Heart left ventricle (tissue), 16 donors: ENCODE measurements at regions of chr12 and their contacts with region 1.

Region 1: DNA sequence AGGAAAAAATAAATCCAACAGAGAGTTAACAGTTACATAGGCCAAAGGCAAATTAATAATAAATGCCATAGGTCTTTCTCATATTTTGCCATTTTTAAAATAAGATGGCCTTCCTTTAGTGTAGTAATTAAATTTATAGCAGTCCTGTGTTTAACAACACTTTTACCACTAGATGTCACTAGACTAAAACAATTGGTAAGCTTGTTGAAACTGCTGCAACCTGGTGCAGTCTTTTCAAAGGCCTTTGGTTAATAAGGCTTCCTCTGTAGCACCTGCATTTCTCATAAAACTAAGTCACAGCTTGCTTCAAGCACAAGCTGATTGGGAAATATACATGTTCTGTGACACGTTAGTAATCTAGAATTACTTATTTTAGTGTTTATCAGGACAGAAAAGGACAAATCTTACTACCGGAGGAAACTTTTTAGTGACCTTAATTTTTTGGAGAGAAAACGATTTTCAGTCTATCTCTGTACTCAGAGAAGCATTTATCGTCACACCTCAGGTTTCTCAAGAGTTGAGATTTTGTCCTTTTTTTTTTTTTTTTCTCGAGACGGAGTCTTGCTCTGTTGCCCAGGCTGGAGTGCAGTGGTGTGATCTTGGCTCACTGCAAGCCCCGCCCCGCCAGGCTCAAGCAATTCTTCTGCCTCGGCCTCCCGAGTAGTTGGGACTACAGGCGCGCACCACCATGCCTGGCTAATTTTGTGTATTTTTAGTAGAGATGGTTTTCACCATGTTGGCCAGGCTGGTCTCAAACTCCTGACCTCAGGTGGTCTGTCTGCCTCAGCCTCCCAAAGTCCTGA is 20.0 kb downstream of the BORCS5 start:
- DNase-seq: no peak
- ATAC-seq: peak; percentile 63 to 83 (median 74)
- H3K4me3 ChIP-seq: no peak overlapping the region
- H3K27ac ChIP-seq: no peak overlapping the region
- H3K4me1 ChIP-seq: peaks cover 0 to 15% (median 9%) of the 10 kb centered on the region in 12 donors
- H3K27me3 ChIP-seq: no peaks in the 10 kb centered on the region
- CTCF ChIP-seq: peak; percentile 63 to 85 (median 76)
- POLR2A ChIP-seq: no peak

Region 2: DNA sequence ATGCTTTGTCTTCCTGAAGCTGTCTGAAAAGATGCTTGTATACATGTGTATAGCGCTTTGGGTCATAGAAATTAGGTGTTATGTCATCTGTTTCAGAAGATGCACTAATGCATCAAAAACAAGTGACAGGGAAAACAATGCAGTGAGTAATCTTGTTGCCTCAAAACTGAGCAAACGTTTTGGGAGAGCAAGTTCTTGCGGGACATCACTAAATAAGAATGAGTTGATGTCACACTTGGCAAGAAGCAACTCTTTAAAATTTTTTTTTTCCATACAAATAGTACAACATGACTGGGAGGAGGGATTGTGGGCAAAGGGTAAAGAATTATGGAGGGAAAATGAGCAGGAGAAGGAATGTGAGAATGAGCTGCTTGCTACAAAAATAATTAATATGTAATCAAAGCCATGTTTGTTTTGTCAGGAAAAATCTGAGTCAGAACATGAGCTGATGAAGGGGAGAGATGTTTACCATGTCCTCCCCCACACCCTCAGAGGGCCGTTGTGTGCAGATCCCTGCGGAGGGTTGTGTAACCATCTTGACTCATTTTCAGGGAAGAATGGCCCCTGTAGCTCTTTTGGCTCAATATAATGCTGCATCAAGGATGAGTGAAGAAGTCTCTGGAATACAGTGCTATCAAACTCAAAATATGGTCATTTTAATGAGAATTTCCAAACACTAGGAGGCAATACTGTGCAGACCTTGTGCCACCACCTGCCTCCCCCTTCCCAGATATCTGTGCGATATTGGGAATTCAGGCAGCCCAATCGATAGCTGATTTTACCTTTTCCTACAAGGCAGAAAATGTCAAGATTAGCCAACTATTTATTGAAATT is 21.4 kb after region 1 on chr12:
- intact Hi-C with region 1: no loop called
- DNase-seq: peak in 4 of 5 donors; percentile 47 to 73 (median 63)
- ATAC-seq: peak; percentile 82 to 96 (median 94)
- H3K4me3 ChIP-seq: no peak overlapping the region
- H3K27ac ChIP-seq: peak overlapping the region in 10 of 12 donors; percentile 44 to 72 (median 56)
- H3K4me1 ChIP-seq: peaks cover 0 to 33% (median 16%) of the 10 kb centered on the region in 12 donors
- H3K27me3 ChIP-seq: no peaks in the 10 kb centered on the region
- CTCF ChIP-seq: peak in 4 of 12 donors; percentile 11 to 29 (median 28)
- POLR2A ChIP-seq: no peak

Region 3: GRCh38 chr12:12442548-12443071 is 65.8 kb after region 1 on chr12:
- intact Hi-C with region 1: no loop called
- DNase-seq: no peak
- ATAC-seq: peak; percentile 43 to 71 (median 60)
- H3K4me3 ChIP-seq: no peak overlapping the region
- H3K27ac ChIP-seq: peak overlapping the region; percentile 36 to 80 (median 70)
- H3K4me1 ChIP-seq: peaks cover 0 to 66% (median 31%) of the 10 kb centered on the region in 12 donors
- H3K27me3 ChIP-seq: no peaks in the 10 kb centered on the region
- CTCF ChIP-seq: no peak
- POLR2A ChIP-seq: no peak

Region 4: GRCh38 chr12:12654691-12655460 is 278.0 kb after region 1 on chr12:
- intact Hi-C with region 1: loop called in 9 of 10 experiments (anchors 1 to 5 kb)
- DNase-seq: no peak
- ATAC-seq: no peak
- H3K4me3 ChIP-seq: no peak overlapping the region
- H3K27ac ChIP-seq: no peak overlapping the region
- H3K4me1 ChIP-seq: peaks cover 0 to 9% (median 0%) of the 10 kb centered on the region in 12 donors
- H3K27me3 ChIP-seq: no peaks in the 10 kb centered on the region
- CTCF ChIP-seq: no peak
- POLR2A ChIP-seq: no peak

Region 5: DNA sequence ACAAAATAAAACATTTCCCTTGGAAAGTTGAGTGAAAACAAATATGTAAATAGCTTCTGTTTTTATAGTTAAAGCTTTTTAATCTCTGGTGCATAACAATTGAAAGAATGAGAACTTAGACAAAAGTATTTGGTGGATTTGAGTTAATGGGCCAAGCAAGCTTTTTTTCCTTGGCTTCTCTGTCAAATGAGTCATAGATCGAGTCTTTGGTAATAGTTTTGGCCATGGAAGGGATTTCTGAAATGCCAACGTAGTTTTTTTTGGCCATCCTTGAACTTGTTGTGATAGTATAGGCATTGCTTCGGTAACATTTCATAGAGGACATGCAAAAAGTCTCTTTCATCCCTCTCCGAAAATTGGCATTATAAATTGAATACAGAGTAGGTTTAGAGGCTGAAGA is 284.2 kb after region 1 on chr12:
- intact Hi-C with region 1: loop called in 8 of 10 experiments (anchors 1 to 5 kb)
- DNase-seq: no peak
- ATAC-seq: no peak
- H3K4me3 ChIP-seq: no peak overlapping the region
- H3K27ac ChIP-seq: no peak overlapping the region
- H3K4me1 ChIP-seq: peaks cover 0 to 6% (median 0%) of the 10 kb centered on the region in 12 donors
- H3K27me3 ChIP-seq: no peaks in the 10 kb centered on the region
- CTCF ChIP-seq: no peak
- POLR2A ChIP-seq: no peak

Region 6: GRCh38 chr12:12704593-12705230 is 327.9 kb after region 1 on chr12:
- intact Hi-C with region 1: loop called (anchors 1 to 10 kb)
- DNase-seq: peak in 4 of 5 donors; percentile 37 to 63 (median 56)
- ATAC-seq: peak; percentile 94 to 99 (median 99)
- H3K4me3 ChIP-seq: no peak overlapping the region
- H3K27ac ChIP-seq: no peak overlapping the region
- H3K4me1 ChIP-seq: peaks cover 0 to 20% (median under 1%) of the 10 kb centered on the region in 12 donors
- H3K27me3 ChIP-seq: no peaks in the 10 kb centered on the region
- CTCF ChIP-seq: peak; percentile 62 to 94 (median 84)
- POLR2A ChIP-seq: no peak

Region 7: DNA sequence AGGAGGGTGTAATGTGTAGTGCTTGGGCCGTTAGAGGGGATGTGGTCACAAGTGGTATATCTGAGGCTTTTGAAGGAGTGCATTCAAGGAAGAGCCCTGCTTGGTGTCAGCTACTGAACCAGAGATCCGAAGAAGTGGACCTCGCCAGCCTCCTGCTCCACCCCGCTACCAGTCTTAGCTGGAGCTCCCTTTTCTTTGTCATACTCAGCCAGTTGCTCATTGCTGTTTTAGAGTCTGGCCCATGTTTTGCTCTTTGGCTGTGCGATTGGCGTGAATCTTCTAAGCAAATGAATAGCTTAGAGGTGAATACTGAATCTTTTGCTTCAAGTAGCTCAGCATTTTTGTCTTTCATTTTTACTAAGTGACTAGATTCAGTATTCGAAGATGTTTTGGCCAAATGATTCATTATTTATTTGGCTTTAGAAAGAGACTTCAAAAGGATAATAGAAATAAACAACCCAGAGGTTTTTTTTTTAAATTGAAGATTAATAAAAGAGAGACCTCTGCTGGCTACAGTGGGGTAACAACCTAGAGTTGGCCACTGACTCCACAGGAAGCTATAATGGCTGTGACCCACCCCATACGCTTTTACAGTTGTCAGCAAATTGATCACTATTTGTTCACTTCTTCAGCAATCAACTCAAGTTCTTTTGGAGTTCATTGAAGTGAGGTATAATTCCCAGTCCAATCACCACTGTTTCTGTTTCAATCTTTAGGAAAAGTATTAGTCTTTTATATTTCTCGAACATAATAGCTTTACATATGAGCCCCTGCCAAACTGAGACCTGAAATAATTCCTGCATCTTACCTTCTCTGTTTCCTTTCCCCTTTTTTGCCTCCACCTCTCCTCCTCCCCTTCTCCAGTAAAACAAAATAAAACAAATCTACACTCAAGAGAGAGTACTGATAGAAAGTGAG is 360.2 kb after region 1 on chr12:
- intact Hi-C with region 1: loop called in 2 of 10 experiments (anchors 2 kb)
- DNase-seq: peak in 2 of 5 donors; percentile 23 to 26
- ATAC-seq: peak; percentile 45 to 83 (median 76)
- H3K4me3 ChIP-seq: peak overlapping the region in 3 of 12 donors; percentile 1 to 15 (median 3)
- H3K27ac ChIP-seq: peak overlapping the region in 8 of 12 donors; percentile 0 to 79 (median 22)
- H3K4me1 ChIP-seq: peaks cover 0 to 44% (median 16%) of the 10 kb centered on the region in 12 donors
- H3K27me3 ChIP-seq: no peaks in the 10 kb centered on the region
- CTCF ChIP-seq: peak; percentile 55 to 82 (median 68)
- POLR2A ChIP-seq: no peak